Esophagus muscularis mucosa (tissue), 4 donors: ENCODE measurements at regions of chr1 and their contacts with region 1.

Region 1: DNA sequence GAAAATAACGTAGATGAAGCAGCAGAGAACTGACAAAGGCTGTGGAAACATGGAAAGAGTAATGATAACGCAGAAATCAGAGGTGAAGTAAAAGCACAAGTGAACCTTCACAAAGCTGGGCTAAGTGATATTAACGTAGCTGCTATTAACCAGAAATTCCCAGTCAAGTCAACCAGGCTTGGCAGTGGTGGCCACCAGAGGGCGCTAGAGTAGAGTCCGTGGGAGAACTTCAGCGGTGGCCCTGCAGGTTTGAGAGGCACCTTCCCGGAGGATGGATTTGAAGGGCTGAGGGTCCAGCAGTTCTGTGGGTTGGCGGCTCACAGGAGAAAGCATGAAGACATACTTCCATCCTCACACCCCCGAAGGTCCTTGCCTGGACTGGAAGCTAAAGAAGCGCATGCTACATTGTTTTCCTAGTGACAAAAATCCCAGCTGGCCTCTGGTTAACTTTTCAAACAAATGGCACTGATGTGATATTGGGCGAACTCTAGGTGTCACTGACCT is 81.7 kb upstream of the ZNF648 start:
- DNase-seq: peak; percentile 99
- H3K4me3 ChIP-seq: peak overlapping the region in 1 of 4 donors; percentile 21
- H3K27ac ChIP-seq: peak overlapping the region; percentile 90 to 97 (median 95)
- H3K4me1 ChIP-seq: peaks cover 26 to 50% (median 41%) of the 10 kb centered on the region in 4 donors
- H3K27me3 ChIP-seq: no peaks in the 10 kb centered on the region
- CTCF ChIP-seq: peak; percentile 95 to 98 (median 97)
- EP300 ChIP-seq: no peak
- POLR2A ChIP-seq: no peak

Region 2: DNA sequence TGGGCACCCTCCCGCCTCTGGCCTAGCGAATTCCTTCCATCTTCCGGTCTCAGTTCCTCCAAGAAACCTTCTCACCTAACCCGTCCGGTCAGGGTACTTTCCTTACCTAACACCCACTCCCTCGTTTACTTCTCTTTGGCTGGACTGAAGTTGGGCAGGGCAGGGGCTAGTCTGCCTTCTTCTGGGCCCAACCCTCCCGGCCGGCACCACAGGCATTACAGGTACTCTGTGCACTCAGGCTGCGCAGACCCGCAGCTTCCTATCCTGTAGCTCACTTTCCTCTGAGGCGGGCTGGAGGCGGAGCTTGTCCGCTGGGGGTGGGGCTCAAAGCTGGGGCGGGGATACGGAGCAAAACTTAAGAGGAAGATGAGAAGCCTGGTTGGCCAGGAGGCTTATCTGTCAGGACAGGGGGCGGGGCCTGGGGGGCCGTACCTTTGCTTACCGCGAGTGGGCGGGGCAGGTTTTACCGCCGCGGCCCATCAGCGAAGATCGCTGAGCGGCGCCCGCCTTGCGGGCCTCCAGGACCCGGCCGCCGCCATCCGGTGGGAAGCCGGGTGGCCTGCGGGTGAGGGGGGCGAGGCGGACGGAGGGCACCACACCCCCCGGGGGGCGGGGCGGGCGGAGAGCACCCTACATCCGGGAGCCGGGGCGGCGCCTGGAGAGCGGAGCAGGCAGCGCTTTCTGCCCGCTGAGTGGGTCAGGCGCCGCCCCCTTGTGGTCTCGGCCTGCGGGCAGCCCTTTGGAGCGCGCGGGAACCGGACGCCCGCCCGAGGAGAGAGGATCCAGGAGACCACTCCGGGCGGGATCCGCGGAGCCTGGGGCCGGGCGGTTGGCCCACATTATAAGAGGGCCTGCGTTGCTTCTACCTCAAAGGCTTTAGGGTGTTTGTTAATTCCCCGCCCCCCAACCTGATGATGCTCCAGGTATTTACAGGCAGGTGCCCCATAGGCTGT is 113.6 kb before region 1 on chr1:
- intact Hi-C with region 1: no loop called
- DNase-seq: peak; percentile 99
- H3K4me3 ChIP-seq: peak overlapping the region; percentile 58 to 75 (median 68)
- H3K27ac ChIP-seq: peak overlapping the region; percentile 79 to 88 (median 84)
- H3K4me1 ChIP-seq: peaks cover 3 to 14% (median 13%) of the 10 kb centered on the region in 4 donors
- H3K27me3 ChIP-seq: no peaks in the 10 kb centered on the region
- CTCF ChIP-seq: peak; percentile 65 to 78 (median 67)
- EP300 ChIP-seq: no peak
- POLR2A ChIP-seq: peak; percentile 55

Region 3: DNA sequence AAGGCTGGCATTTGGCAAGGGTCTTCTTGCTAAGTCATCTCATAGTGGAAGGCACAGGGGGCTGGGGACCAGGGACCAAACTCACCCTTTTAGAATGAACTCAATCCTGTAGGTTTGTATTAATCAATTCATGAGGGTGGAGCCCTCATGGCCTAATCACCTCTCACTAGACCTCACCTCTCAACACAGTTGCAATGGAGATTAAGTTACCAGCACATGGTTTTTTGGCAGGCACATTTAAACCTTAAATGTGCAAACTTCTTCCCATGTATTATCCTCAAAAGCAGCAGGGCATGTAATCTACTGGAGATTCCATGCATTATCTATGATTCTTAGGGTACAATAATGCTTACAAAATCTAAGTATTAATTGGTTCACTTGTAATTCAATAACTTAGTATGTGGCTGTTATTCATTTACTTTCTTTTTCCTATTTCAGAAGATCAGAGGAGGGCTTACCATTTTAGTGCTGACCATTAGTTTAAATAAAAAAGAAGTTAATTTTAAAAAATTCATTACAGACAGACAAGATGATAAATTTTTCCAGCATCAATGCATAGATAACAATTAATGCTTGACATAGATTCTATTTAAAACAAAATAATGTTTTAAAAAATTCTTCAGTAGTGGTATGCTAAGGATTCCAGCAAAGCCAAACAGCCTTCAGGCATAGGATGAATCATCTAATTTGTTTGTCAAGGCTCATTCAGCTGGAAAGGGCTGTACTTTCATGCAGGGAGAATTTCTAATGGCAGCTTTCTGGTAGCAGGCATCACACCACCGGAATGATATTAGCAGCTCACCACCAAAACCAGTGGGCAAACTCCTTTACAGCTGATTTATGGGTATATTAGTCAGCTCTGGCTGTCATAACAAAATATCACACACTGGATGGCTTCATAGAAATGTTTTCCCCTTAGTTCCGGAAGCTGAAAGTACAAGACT is 42.9 kb after region 1 on chr1:
- intact Hi-C with region 1: no loop called
- DNase-seq: no peak
- H3K4me3 ChIP-seq: no peak overlapping the region
- H3K27ac ChIP-seq: peak overlapping the region in 1 of 4 donors; percentile 27
- H3K4me1 ChIP-seq: peaks cover 2 to 27% (median 21%) of the 10 kb centered on the region in 4 donors
- H3K27me3 ChIP-seq: no peaks in the 10 kb centered on the region
- CTCF ChIP-seq: no peak
- EP300 ChIP-seq: no peak
- POLR2A ChIP-seq: no peak

Region 4: GRCh38 chr1:182196897-182197870 is 54.0 kb after region 1 on chr1:
- intact Hi-C with region 1: loop called (anchors 2 kb)
- DNase-seq: no peak
- H3K4me3 ChIP-seq: no peak overlapping the region
- H3K27ac ChIP-seq: peak overlapping the region; percentile 72 to 84 (median 75)
- H3K4me1 ChIP-seq: peaks cover 9 to 67% (median 49%) of the 10 kb centered on the region in 4 donors
- H3K27me3 ChIP-seq: no peaks in the 10 kb centered on the region
- CTCF ChIP-seq: peak in 1 of 3 experiments; percentile 10
- EP300 ChIP-seq: no peak
- POLR2A ChIP-seq: no peak

Region 5: DNA sequence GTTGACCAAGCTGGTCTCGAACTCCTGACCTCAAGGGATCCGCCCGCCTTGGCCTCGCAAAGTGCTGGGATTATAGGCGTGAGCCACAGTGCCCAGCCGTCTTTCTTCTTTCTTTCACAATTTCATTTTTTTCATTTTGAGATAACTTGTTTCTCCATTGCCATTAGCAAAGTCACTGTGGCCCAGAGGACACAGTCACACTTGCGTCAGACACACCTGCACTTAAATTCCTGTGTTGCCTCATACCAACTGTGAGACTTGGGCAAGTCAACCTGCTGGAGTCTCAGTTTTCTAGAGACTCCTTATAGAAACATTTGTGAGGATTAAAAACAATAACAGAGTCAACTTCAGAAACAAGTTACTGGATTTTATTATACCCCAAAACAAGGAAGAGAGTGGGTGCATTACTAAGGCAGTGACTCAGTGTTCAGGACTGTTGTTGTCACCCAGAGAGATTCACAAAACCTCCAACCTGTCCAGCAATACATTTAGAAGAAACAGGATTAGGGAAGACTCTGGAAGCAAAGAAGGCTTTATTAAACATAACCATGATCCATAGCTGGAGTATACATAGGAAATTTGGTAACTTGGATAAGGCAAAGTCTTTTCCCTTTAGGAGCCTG is 254.7 kb after region 1 on chr1:
- intact Hi-C with region 1: loop called (anchors 1 kb)
- DNase-seq: no peak
- H3K4me3 ChIP-seq: no peak overlapping the region
- H3K27ac ChIP-seq: no peak overlapping the region
- H3K4me1 ChIP-seq: peaks cover 19 to 41% (median 28%) of the 10 kb centered on the region in 4 donors
- H3K27me3 ChIP-seq: no peaks in the 10 kb centered on the region
- CTCF ChIP-seq: no peak
- EP300 ChIP-seq: no peak
- POLR2A ChIP-seq: no peak